Ascending aorta (tissue), 2 donors: ENCODE measurements at regions of chr6 and their contacts with region 1.

Region 1: DNA sequence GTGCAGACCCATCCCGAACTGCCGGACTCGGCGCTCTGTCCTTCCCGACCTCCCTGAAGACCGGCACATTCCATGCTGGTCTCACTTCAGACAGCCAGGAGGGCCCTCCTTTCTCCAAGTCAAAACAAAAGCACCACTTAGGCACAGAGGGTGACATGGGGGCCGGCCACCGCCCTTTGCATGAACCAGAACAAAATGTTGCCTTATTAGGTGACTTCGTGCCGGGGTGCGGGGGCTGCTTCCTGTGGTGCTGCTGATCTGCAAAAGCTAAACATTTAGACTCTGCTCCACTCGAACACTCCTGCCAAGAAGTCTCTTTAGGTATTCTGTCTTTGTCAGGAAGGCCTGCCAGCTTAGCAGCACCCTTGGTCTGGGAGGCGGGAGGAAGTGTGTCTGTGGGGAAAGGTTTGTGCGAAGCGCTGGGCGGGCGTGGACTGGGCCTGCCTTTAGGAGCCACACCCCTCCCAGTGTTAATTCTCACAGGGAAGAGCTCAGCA is 133.8 kb downstream of the SMOC2 start:
- DNase-seq: peak; percentile 55 to 86
- H3K4me3 ChIP-seq: peak overlapping the region in 1 of 2 donors; percentile 14
- H3K27ac ChIP-seq: peak overlapping the region; percentile 83 to 84
- H3K4me1 ChIP-seq: peaks cover 26 to 38% of the 10 kb centered on the region in 2 donors
- H3K27me3 ChIP-seq: no peaks in the 10 kb centered on the region
- CTCF ChIP-seq: no peak

Region 2: GRCh38 chr6:168526841-168527281 is 47.9 kb before region 1 on chr6:
- intact Hi-C with region 1: loop called (anchors 5 kb)
- DNase-seq: peak in 1 of 2 donors; percentile 83
- H3K4me3 ChIP-seq: no peak overlapping the region
- H3K27ac ChIP-seq: peak overlapping the region; percentile 90 to 95
- H3K4me1 ChIP-seq: peaks cover 14 to 32% of the 10 kb centered on the region in 2 donors
- H3K27me3 ChIP-seq: no peaks in the 10 kb centered on the region
- CTCF ChIP-seq: no peak

Region 3: DNA sequence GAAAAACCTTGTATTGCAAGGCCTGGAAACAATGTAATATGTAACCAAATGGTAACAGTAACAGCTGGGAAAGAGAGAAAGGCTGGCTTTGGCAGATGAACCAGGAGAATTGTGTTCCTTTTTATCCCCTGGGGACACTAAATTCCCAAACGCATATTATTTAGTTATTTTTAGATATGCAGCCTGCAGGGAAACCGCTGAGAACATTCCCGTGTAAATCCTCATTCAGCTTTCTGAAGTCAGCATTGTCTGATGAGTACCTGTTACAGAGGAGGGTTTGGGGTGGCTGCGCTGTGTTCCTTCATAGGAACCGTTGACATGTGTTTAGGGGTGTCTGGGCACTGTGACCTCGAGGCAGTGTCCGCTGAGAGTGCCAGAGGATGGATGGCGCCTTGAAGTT is 32.4 kb before region 1 on chr6:
- intact Hi-C with region 1: loop called (anchors 2 kb)
- DNase-seq: no peak
- H3K4me3 ChIP-seq: no peak overlapping the region
- H3K27ac ChIP-seq: peak overlapping the region; percentile 67 to 71
- H3K4me1 ChIP-seq: peaks cover 13 to 47% of the 10 kb centered on the region in 2 donors
- H3K27me3 ChIP-seq: no peaks in the 10 kb centered on the region
- CTCF ChIP-seq: no peak

Region 4: DNA sequence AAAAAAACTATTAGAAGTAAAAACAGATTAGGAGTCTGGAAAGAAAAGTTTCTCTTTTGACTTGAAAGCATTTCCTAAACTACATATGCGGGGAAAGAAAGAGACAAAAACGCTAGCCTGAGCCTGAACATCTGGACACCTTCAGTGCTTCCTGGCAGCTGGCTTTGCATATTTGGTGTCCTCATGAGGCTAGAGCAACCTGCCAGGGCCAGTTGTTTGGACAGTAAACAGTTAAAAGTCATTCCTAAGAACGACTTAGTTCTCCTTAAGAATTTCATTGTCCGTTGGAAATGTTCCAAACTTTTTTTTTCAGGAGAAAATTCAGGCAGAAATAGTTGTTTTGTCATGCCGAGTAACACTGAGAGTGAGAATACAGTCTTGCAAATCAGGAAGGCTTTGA is 66.0 kb after region 1 on chr6:
- intact Hi-C with region 1: no loop called
- DNase-seq: no peak
- H3K4me3 ChIP-seq: no peak overlapping the region
- H3K27ac ChIP-seq: no peak overlapping the region
- H3K4me1 ChIP-seq: peaks cover 0 to 19% of the 10 kb centered on the region in 2 donors
- H3K27me3 ChIP-seq: no peaks in the 10 kb centered on the region
- CTCF ChIP-seq: no peak

Region 5: GRCh38 chr6:168791917-168792316 is 217.2 kb after region 1 on chr6:
- intact Hi-C with region 1: no loop called
- DNase-seq: no peak
- H3K4me3 ChIP-seq: no peak overlapping the region
- H3K27ac ChIP-seq: no peak overlapping the region
- H3K4me1 ChIP-seq: no peaks in the 10 kb centered on the region
- H3K27me3 ChIP-seq: no peaks in the 10 kb centered on the region
- CTCF ChIP-seq: no peak